Left ventricle myocardium inferior (tissue), 1 donor: ENCODE measurements at regions of chr4 and their contacts with region 1.

Region 1: GRCh38 chr4:52028969-52029368 is 8.8 kb upstream of the LRRC66 start:
- DNase-seq: no peak
- H3K4me3 ChIP-seq: no peak overlapping the region
- H3K27ac ChIP-seq: no peak overlapping the region
- H3K4me1 ChIP-seq: peaks cover 7% of the 10 kb centered on the region
- H3K27me3 ChIP-seq: no peaks in the 10 kb centered on the region
- CTCF ChIP-seq: no peak

Region 2: DNA sequence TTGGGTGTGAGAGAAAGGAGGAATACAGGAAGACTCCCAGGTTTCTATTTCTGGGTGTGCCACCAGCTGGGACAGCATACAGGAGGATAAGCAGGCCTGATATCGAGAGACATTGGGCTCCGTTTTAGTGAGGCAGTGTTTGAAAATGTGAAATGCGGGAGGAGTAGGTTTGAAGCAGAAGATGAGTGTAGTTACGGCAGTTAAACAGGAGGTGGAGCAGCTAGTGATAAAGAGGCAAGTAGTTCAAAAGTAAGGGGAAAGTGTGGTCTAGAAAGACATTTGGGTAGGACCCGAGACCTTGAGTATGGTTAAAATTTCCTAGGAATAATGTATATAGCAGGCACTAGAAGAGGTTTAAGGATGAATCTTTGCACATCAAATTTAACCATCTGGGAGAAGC is 143.6 kb before region 1 on chr4:
- intact Hi-C with region 1: loop called (anchors 5 kb)
- DNase-seq: no peak
- H3K4me3 ChIP-seq: no peak overlapping the region
- H3K27ac ChIP-seq: no peak overlapping the region
- H3K4me1 ChIP-seq: no peaks in the 10 kb centered on the region
- H3K27me3 ChIP-seq: no peaks in the 10 kb centered on the region
- CTCF ChIP-seq: peak; percentile 46